ENCODE measurements at regions of chr1 and their contacts with region 1.

Region 1: GRCh38 chr1:92968138-92969032 is 7.1 kb upstream of the DIPK1A start:
- DNase-seq: peak; percentile 59
- ATAC-seq: peak; percentile 60
- H3K4me3 Mint-ChIP-seq: no peak overlapping the region
- H3K27ac Mint-ChIP-seq: no peak overlapping the region
- H3K4me1 Mint-ChIP-seq: peaks cover 39% of the 10 kb centered on the region
- H3K27me3 Mint-ChIP-seq: no peaks in the 10 kb centered on the region

Region 2: DNA sequence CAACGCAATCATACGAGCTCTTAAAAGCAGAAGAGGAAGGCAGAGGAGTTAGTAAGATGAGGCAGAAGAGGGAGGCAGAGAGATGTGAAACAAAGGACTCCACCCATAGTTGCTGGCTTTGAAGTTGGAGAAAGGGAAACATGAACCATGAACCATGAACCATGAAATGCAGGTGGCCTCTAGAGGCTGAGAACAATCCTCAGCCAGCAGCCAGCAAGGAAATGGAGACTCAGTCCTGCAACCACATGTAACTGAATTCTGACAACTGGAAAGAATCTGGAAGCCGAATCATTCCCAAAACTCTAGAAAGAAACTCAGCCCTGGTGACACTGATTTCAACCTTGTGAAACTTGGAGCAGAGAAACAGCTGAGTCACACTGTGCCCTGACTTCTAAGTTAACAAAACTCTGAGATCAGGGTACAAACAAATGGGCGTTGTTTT is 17.2 kb before region 1 on chr1:
- CTCF ChIA-PET with region 1: interaction called, 51 read pairs
- POLR2A ChIA-PET with region 1: no interaction called
- DNase-seq: peak; percentile 45
- ATAC-seq: peak; percentile 69
- H3K4me3 Mint-ChIP-seq: no peak overlapping the region
- H3K27ac Mint-ChIP-seq: no peak overlapping the region
- H3K4me1 Mint-ChIP-seq: peaks cover 38% of the 10 kb centered on the region
- H3K27me3 Mint-ChIP-seq: no peaks in the 10 kb centered on the region

Region 3: GRCh38 chr1:92987462-92987861 is 19.1 kb after region 1 on chr1:
- CTCF ChIA-PET with region 1: interaction called, 623 read pairs
- POLR2A ChIA-PET with region 1: interaction called, 64 read pairs
- DNase-seq: no peak
- ATAC-seq: no peak
- H3K4me3 Mint-ChIP-seq: no peak overlapping the region
- H3K27ac Mint-ChIP-seq: no peak overlapping the region
- H3K4me1 Mint-ChIP-seq: peaks cover 44% of the 10 kb centered on the region
- H3K27me3 Mint-ChIP-seq: no peaks in the 10 kb centered on the region

Region 4: DNA sequence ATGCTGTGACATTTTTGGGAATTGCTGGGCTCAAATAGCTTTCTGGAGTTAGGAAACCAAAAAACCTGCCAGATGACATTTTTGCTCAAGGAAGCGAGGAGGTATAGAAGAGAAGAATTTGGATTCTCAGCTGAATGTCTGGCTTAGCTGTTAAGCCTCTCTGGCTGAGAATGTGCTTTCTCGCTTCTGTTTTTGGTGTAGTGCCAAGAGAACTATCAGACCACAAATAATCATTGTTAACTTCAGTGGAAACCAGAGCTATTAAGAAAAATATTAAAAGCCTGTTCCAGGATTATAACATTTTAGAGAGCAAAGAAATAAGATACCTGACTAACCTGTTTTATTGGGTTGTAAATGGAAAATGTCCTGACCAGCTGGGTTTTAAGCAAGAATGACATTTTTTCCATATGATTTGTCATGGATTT is 32.4 kb after region 1 on chr1:
- CTCF ChIA-PET with region 1: interaction called, 14 read pairs
- POLR2A ChIA-PET with region 1: no interaction called
- DNase-seq: no peak
- ATAC-seq: no peak
- H3K4me3 Mint-ChIP-seq: no peak overlapping the region
- H3K27ac Mint-ChIP-seq: no peak overlapping the region
- H3K4me1 Mint-ChIP-seq: no peaks in the 10 kb centered on the region
- H3K27me3 Mint-ChIP-seq: peaks cover 29% of the 10 kb centered on the region

Region 5: DNA sequence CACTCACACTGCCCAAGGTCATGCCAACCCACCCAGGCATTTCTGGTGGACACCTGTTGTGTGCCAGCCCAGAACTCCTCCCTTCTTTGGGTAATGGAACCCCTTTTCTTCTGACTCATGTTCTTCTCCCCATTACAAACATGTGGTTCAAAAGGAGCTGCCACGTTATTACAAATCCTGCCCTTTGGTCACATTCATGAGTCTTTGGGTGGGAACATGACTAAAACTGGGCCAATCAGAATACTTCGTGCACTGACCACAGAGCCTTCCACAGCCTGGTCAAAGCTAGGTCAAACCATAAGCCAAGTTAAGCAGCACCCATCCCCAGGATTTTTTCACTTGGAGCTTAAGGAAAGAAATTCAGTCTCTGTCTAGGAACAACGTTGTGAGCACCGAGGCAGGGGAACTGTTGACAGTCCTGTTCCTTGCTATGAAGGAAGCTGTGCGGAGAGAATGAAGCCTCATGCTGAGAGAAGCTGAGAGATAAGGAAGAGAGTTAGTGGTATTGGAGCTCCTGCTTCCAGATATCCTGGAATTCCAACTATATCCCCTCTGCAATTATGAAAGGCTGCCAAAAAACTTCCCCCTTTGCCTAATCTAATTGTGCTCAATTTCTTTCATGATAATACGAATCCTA is 39.7 kb after region 1 on chr1:
- CTCF ChIA-PET with region 1: interaction called, 13 read pairs
- POLR2A ChIA-PET with region 1: no interaction called
- DNase-seq: no peak
- ATAC-seq: no peak
- H3K4me3 Mint-ChIP-seq: no peak overlapping the region
- H3K27ac Mint-ChIP-seq: no peak overlapping the region
- H3K4me1 Mint-ChIP-seq: no peaks in the 10 kb centered on the region
- H3K27me3 Mint-ChIP-seq: peaks cover 21% of the 10 kb centered on the region

Region 6: GRCh38 chr1:93015590-93015989 is 47.2 kb after region 1 on chr1:
- CTCF ChIA-PET with region 1: interaction called, 11 read pairs
- POLR2A ChIA-PET with region 1: no interaction called
- DNase-seq: no peak
- ATAC-seq: no peak
- H3K4me3 Mint-ChIP-seq: no peak overlapping the region
- H3K27ac Mint-ChIP-seq: no peak overlapping the region
- H3K4me1 Mint-ChIP-seq: peaks cover 13% of the 10 kb centered on the region
- H3K27me3 Mint-ChIP-seq: peaks cover 26% of the 10 kb centered on the region

Measured in activated CD8-positive, alpha-beta T cell treated with anti-CD3 and anti-CD28 coated beads, Interleukin-2, amount 10 ng/mL, durations not matched to agents 7 days and 5 days (primary cell).